MCF 10A (cell line): ENCODE measurements at regions of chr12 and their contacts with region 1.

Region 1: GRCh38 chr12:990661-991349 is at the start of gene ERC1:
- DNase-seq: peak; percentile 87
- H3K4me3 Mint-ChIP-seq: peak within 1 kb of the TSS; percentile 99
- H3K27ac Mint-ChIP-seq: peak within 1 kb of the TSS; percentile 56
- H3K4me1 Mint-ChIP-seq: peaks cover 40% of the 10 kb centered on the region
- H3K27me3 Mint-ChIP-seq: no peaks in the 10 kb centered on the region
- CTCF ChIP-seq: no peak
- total RNA-seq, gene ERC1: 55.1 and 86.8 TPM in 2 replicates

Region 2: DNA sequence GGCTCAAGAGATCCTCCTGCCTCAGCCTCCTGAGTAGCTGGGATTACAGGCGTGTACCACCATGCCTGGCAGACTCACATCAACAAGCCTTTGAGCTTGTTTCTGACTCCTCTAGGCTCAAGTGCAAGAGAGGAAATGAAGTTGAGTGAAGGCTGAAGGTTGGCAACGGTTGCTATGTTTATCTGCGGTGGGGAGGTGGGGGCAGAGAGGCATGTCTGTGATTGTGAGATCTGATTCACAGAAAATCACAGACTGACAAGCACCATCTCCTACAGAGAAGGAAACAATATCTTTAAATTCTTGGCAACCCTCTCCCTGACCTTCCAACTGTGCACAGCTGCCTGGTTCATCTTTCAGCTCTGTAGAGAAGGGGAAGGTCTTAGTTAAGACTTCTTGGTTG is 305.4 kb before region 1 on chr12:
- CTCF ChIA-PET with region 1: no interaction called
- POLR2A ChIA-PET with region 1: no interaction called
- intact Hi-C with region 1: no loop called
- DNase-seq: no peak
- H3K4me3 Mint-ChIP-seq: no peak overlapping the region
- H3K27ac Mint-ChIP-seq: no peak overlapping the region
- H3K4me1 Mint-ChIP-seq: no peaks in the 10 kb centered on the region
- H3K27me3 Mint-ChIP-seq: no peaks in the 10 kb centered on the region
- CTCF ChIP-seq: no peak

Region 3: DNA sequence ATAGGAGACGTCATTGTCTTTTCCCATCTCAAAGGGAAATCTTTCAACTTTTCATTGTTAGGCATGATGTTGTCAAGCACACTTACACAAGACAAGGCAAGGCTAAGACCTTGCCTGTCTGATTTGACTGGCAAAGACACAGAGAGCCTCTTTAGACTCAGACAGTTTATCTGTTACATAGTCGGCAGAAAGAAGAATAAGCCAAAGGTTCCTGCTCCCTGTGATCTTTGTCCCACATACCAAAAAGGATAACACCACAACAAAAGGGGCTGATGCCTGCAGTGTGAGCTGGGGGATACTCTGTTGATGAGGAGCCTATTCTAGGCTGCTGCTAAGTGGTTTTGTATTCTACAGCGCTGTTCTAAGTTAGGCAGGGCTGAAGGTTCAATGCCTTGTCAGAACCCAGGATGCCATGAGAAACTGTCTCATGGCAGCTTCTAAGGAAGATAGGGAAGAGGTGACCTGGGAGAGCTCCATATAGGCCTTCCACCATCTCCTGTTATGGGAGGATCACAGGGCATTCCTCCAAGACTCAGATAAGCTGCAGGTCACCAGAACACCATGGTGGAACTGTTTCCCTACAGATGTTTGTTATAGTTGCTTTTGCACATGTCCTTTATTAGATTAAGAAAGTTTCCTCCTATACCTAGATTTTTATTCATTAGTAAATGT is 12.9 kb after region 1 on chr12:
- CTCF ChIA-PET with region 1: interaction called, 3 read pairs
- POLR2A ChIA-PET with region 1: interaction called, 47 read pairs
- intact Hi-C with region 1: no loop called
- DNase-seq: no peak
- H3K4me3 Mint-ChIP-seq: no peak overlapping the region
- H3K27ac Mint-ChIP-seq: no peak overlapping the region
- H3K4me1 Mint-ChIP-seq: peaks cover 10% of the 10 kb centered on the region
- H3K27me3 Mint-ChIP-seq: no peaks in the 10 kb centered on the region
- CTCF ChIP-seq: no peak

Region 4: GRCh38 chr12:1013618-1014489 is 23.0 kb after region 1 on chr12:
- CTCF ChIA-PET with region 1: no interaction called
- POLR2A ChIA-PET with region 1: interaction called, 62 read pairs
- intact Hi-C with region 1: no loop called
- DNase-seq: peak; percentile 91
- H3K4me3 Mint-ChIP-seq: peak overlapping the region; percentile 47
- H3K27ac Mint-ChIP-seq: peak overlapping the region; percentile 96
- H3K4me1 Mint-ChIP-seq: peaks cover 11% of the 10 kb centered on the region
- H3K27me3 Mint-ChIP-seq: no peaks in the 10 kb centered on the region
- CTCF ChIP-seq: no peak

Region 5: GRCh38 chr12:1093166-1093751 is 102.5 kb after region 1 on chr12:
- CTCF ChIA-PET with region 1: interaction called, 4 read pairs
- POLR2A ChIA-PET with region 1: interaction called, 12 read pairs
- intact Hi-C with region 1: loop called (anchors 5 kb)
- DNase-seq: peak; percentile 75
- H3K4me3 Mint-ChIP-seq: no peak overlapping the region
- H3K27ac Mint-ChIP-seq: no peak overlapping the region
- H3K4me1 Mint-ChIP-seq: peaks cover 10% of the 10 kb centered on the region
- H3K27me3 Mint-ChIP-seq: no peaks in the 10 kb centered on the region
- CTCF ChIP-seq: peak; percentile 75